ENCODE measurements at regions of chr3 and their contacts with region 1.

Region 1: GRCh38 chr3:97910931-97911351 is 61.3 kb downstream of the RIOX2 start:
- DNase-seq: no peak
- H3K4me3 ChIP-seq: no peak overlapping the region
- H3K27ac ChIP-seq: no peak overlapping the region
- H3K4me1 ChIP-seq: no peaks in the 10 kb centered on the region
- H3K27me3 ChIP-seq: no peaks in the 10 kb centered on the region
- CTCF ChIP-seq: no peak

Region 2: DNA sequence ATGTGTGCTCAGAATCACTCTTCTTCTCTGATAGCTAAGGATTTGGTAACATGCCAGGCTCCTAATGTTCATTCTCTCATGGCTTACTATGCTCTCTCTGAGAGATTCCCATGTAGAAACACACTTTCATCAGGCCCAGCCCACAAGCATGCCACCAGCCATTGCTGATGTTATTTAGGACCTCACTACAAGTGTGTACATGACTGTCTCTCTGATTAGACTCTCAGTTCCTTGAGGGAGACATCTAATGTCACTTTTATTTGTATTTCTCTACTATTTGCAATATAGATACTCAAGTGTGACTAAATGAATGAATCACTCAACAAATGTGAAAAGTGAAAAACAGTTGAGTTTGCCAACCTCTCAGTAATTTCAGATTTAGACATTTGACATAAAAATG is 230.7 kb before region 1 on chr3:
- intact Hi-C with region 1: no loop called
- DNase-seq: no peak
- H3K4me3 ChIP-seq: no peak overlapping the region
- H3K27ac ChIP-seq: no peak overlapping the region
- H3K4me1 ChIP-seq: no peaks in the 10 kb centered on the region
- H3K27me3 ChIP-seq: no peaks in the 10 kb centered on the region
- CTCF ChIP-seq: no peak

Region 3: DNA sequence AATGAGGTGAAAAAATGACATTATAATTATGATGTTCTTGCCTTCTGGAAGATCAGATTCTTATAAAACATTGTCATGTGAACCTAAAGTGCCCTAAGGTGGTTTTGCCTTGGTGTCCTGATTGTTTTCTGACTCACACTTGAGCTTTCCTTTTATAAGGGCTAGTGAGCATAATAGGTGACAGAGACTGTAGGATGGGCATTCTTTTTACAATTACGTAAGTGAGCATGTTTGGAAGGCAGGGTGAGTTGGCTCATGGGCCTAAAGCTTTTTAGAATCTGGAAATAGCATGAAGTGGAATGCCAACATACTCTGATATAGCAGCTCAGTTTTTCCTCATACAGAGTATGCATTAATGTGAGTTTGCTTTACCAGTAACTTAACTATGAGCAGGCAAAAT is 47.9 kb before region 1 on chr3:
- intact Hi-C with region 1: loop called (anchors 10 kb)
- DNase-seq: no peak
- H3K4me3 ChIP-seq: no peak overlapping the region
- H3K27ac ChIP-seq: no peak overlapping the region
- H3K4me1 ChIP-seq: no peaks in the 10 kb centered on the region
- H3K27me3 ChIP-seq: no peaks in the 10 kb centered on the region
- CTCF ChIP-seq: no peak

Measured in tibial artery (tissue), 4 donors.